ENCODE measurements at regions of chr10 and their contacts with region 1.

Region 1: GRCh38 chr10:101939282-101939648 is 95.7 kb upstream of the KCNIP2 start:
- DNase-seq: no peak
- CTCF ChIP-seq: no peak

Region 2: DNA sequence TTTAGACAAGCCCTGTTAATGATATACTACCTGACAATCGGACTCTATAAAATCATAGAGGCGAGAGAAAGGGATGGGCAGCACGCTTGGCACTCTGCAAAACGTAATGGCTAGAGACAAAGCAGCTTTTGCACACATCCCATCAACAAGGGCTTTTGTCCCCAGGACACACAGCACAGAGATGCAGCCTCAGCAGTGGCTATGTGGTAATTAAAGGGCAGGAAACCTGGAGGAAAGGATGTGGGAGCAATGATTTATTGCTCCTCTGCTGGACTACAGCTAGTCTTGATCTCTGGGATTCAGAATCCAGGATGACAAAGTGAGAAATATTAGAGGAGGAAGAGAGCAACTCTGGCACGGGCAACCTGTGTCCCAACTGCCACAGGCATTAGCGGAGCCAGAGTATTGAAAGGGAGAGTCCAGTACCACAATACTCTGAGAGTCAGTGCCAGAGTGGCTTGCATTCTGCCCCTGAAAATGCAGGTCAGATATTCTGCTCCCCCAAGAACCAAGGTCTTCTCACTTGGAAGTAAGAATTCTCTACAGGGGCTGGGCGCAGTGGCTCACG is 20.2 kb after region 1 on chr10:
- CTCF ChIA-PET with region 1: interaction called, 14 read pairs
- POLR2A ChIA-PET with region 1: no interaction called
- DNase-seq: no peak
- CTCF ChIP-seq: no peak

Measured in GM10248 (cell line).